H1 (cell line): ENCODE measurements at regions of chr6 and their contacts with region 1.

Region 1: GRCh38 chr6:137707590-137708360 is 159.3 kb upstream of the TNFAIP3 start:
- DNase-seq: no peak
- H3K4me3 ChIP-seq: no peak overlapping the region
- H3K27ac ChIP-seq: no peak overlapping the region
- H3K4me1 ChIP-seq: no peaks in the 10 kb centered on the region
- H3K27me3 ChIP-seq: no peaks in the 10 kb centered on the region
- CTCF ChIP-seq: peak; percentile 34 to 72 (median 69)
- EP300 ChIP-seq: no peak
- POLR2A ChIP-seq: no peak
- RAD21 ChIP-seq: peak; percentile 87 to 88

Region 2: GRCh38 chr6:137697267-137697938 is 10.4 kb before region 1 on chr6:
- CTCF ChIA-PET with region 1: interaction called, 32 read pairs
- POLR2A ChIA-PET with region 1: no interaction called
- DNase-seq: no peak
- H3K4me3 ChIP-seq: no peak overlapping the region
- H3K27ac ChIP-seq: no peak overlapping the region
- H3K4me1 ChIP-seq: peaks cover 0 to 2% (median 0%) of the 10 kb centered on the region in 4 experiments; a peak in 2 of 7 replicates
- H3K27me3 ChIP-seq: no peaks in the 10 kb centered on the region
- CTCF ChIP-seq: peak; percentile 3 to 55 (median 28); a peak in 3 of 4 replicates
- EP300 ChIP-seq: no peak
- POLR2A ChIP-seq: no peak
- RAD21 ChIP-seq: peak; percentile 32 to 45; a peak in 2 of 4 replicates

Region 3: GRCh38 chr6:137799950-137800568 is 92.3 kb after region 1 on chr6:
- CTCF ChIA-PET with region 1: interaction called, 13 read pairs
- POLR2A ChIA-PET with region 1: no interaction called
- DNase-seq: no peak
- H3K4me3 ChIP-seq: no peak overlapping the region
- H3K27ac ChIP-seq: no peak overlapping the region
- H3K4me1 ChIP-seq: no peaks in the 10 kb centered on the region; a peak in 1 of 7 replicates
- H3K27me3 ChIP-seq: no peaks in the 10 kb centered on the region
- CTCF ChIP-seq: peak in 2 of 3 experiments; percentile 60 to 65; a peak in 3 of 4 replicates
- EP300 ChIP-seq: no peak
- POLR2A ChIP-seq: no peak
- RAD21 ChIP-seq: peak; percentile 66 to 73

Region 4: DNA sequence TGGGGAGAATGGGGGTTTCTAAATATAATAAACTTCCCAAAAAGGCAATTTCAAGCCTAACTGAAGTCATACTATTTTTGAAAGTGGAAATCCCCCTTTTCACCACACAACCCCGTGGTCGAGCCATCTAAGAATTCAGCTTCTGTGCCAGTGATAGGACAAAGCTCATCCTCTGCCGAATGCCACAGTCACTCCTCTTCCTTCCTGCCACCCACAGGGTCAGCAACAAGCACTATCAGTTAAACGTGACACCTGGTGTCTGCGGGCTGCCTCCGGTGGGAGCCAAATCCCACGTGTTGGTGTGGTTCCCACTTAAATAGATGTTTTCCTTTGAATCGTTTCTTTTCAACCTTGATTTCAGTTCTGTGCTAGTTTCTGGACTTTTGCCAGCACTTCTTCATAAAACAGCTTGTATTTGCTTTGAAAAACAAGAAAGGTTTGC is 220.0 kb after region 1 on chr6:
- CTCF ChIA-PET with region 1: interaction called, 10 read pairs
- POLR2A ChIA-PET with region 1: no interaction called
- DNase-seq: no peak
- H3K4me3 ChIP-seq: no peak overlapping the region
- H3K27ac ChIP-seq: no peak overlapping the region
- H3K4me1 ChIP-seq: peaks cover 3 to 18% (median 6%) of the 10 kb centered on the region in 4 experiments; a peak in 6 of 7 replicates
- H3K27me3 ChIP-seq: peaks cover 0 to 2% (median 0%) of the 10 kb centered on the region in 4 experiments; a peak in 1 of 7 replicates
- CTCF ChIP-seq: no peak
- EP300 ChIP-seq: no peak
- POLR2A ChIP-seq: no peak
- RAD21 ChIP-seq: no peak

Region 5: DNA sequence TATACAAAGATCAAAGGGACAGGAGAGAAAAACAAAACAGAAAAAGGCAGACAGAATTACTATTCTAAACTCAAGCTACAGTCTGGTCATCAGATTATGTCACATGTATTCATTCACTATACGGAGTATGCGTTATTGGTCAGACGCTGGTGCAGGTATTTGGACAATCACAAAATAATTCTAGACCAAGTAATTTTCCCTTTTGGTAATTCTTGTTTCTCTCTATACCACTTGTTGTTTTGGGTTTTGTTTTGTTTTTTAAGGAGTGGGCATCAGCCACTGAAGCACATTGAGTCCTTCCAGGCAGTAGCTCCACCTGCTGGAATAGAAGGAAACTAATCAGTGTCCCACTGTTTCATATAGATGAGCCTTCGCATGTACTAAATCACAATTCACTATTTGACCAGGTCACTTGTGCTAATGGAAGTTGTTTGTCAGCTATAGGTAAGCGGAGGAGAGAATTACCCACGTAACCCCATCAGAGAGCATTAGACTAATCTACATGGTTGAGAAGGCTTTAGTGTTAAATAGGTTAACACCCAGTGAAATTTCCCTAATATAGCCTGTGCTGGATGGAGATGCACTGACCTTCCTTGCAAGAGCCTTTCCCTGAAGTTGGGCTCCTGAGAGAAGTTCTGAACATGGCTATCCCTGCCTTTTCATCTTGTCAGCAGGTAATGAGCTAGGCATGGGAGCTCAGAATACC is 237.2 kb after region 1 on chr6:
- CTCF ChIA-PET with region 1: interaction called, 42 read pairs
- POLR2A ChIA-PET with region 1: interaction called, 4 read pairs
- DNase-seq: no peak
- H3K4me3 ChIP-seq: no peak overlapping the region
- H3K27ac ChIP-seq: no peak overlapping the region
- H3K4me1 ChIP-seq: no peaks in the 10 kb centered on the region
- H3K27me3 ChIP-seq: no peaks in the 10 kb centered on the region
- CTCF ChIP-seq: peak in 2 of 3 experiments; percentile 65 to 76; a peak in 3 of 4 replicates
- EP300 ChIP-seq: no peak
- POLR2A ChIP-seq: no peak
- RAD21 ChIP-seq: peak; percentile 72 to 78

Region 6: GRCh38 chr6:138001750-138002349 is 294.1 kb after region 1 on chr6:
- CTCF ChIA-PET with region 1: interaction called, 19 read pairs
- POLR2A ChIA-PET with region 1: no interaction called
- DNase-seq: peak in 1 of 2 experiments; percentile 73
- H3K4me3 ChIP-seq: no peak overlapping the region
- H3K27ac ChIP-seq: no peak overlapping the region
- H3K4me1 ChIP-seq: peaks cover 0 to 5% (median 1%) of the 10 kb centered on the region in 4 experiments; a peak in 3 of 7 replicates
- H3K27me3 ChIP-seq: no peaks in the 10 kb centered on the region
- CTCF ChIP-seq: peak; percentile 7 to 85 (median 78)
- EP300 ChIP-seq: no peak
- POLR2A ChIP-seq: no peak
- RAD21 ChIP-seq: peak; percentile 91 to 93